ENCODE measurements at regions of chr11 and their contacts with region 1.

Region 1: GRCh38 chr11:66408488-66409214 is 12.2 kb upstream of the NPAS4 start:
- DNase-seq: peak; percentile 84 to 97 (median 93)
- ATAC-seq: peak; percentile 88
- H3K4me3 ChIP-seq: peak overlapping the region; percentile 34
- H3K4me3 Mint-ChIP-seq: peak overlapping the region; percentile 84
- H3K27ac ChIP-seq: no peak overlapping the region
- H3K27ac Mint-ChIP-seq: no peak overlapping the region
- H3K4me1 ChIP-seq: peaks cover 14% of the 10 kb centered on the region
- H3K4me1 Mint-ChIP-seq: peaks cover 5% of the 10 kb centered on the region
- H3K27me3 ChIP-seq: peaks cover 2 to 19% of the 10 kb centered on the region in 2 experiments
- H3K27me3 Mint-ChIP-seq: peaks cover 50% of the 10 kb centered on the region
- CTCF ChIP-seq: peak; percentile 100

Region 2: DNA sequence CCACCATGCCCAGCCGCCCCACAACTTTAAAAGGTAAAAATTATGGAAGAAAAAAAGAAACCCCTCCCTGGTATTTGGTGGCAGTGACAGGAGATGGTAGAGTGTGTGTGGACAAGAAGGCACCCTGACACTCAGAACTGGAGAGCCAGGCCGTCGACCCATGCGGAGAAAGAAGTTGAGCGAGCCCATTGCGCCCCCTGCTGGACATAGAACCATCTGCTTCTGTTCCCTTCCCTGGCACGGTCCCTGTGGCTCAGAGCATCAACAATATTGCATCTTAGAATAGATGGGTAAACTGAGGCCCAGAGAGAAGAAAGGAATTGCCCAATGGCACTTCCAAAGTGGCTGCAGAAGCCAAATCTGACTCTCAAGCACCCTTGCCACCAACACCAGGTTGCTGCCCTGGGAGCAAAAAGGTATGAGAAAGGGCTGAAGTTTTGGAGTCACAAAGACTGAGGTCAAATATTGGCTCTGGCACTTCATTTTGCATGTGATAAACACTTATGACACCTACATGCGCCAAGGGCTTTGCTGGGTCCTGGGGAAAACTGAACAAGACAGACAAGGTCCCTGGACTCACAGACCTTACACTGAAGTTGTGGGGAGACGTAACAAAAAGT is 21.4 kb after region 1 on chr11:
- CTCF ChIA-PET with region 1: interaction called, 4 read pairs
- POLR2A ChIA-PET with region 1: no interaction called
- intact Hi-C with region 1: loop called (anchors 1 kb)
- DNase-seq: peak; percentile 56 to 87 (median 64)
- ATAC-seq: peak; percentile 68
- H3K4me3 ChIP-seq: no peak overlapping the region
- H3K4me3 Mint-ChIP-seq: no peak overlapping the region
- H3K27ac ChIP-seq: no peak overlapping the region
- H3K27ac Mint-ChIP-seq: no peak overlapping the region
- H3K4me1 ChIP-seq: no peaks in the 10 kb centered on the region
- H3K4me1 Mint-ChIP-seq: peaks cover 5% of the 10 kb centered on the region
- H3K27me3 ChIP-seq: no peaks in the 10 kb centered on the region
- H3K27me3 Mint-ChIP-seq: peaks cover 4% of the 10 kb centered on the region
- CTCF ChIP-seq: peak; percentile 81

Region 3: GRCh38 chr11:66480117-66480938 is 71.7 kb after region 1 on chr11 and contains the start of gene DPP3:
- CTCF ChIA-PET with region 1: interaction called, 3 read pairs
- POLR2A ChIA-PET with region 1: interaction called, 5 read pairs
- intact Hi-C with region 1: loop called (anchors 1 kb)
- DNase-seq: peak; percentile 91 to 97 (median 95)
- ATAC-seq: peak; percentile 98
- H3K4me3 ChIP-seq: peak within 1 kb of the TSS; percentile 79
- H3K4me3 Mint-ChIP-seq: peak within 1 kb of the TSS; percentile 91
- H3K27ac ChIP-seq: peak within 1 kb of the TSS; percentile 70 to 79
- H3K27ac Mint-ChIP-seq: peak within 1 kb of the TSS; percentile 83
- H3K4me1 ChIP-seq: peaks cover 29% of the 10 kb centered on the region
- H3K4me1 Mint-ChIP-seq: peaks cover 24% of the 10 kb centered on the region
- H3K27me3 ChIP-seq: no peaks in the 10 kb centered on the region
- H3K27me3 Mint-ChIP-seq: no peaks in the 10 kb centered on the region
- CTCF ChIP-seq: no peak
- total RNA-seq, gene DPP3: 16.9 to 17.7 TPM

Region 4: DNA sequence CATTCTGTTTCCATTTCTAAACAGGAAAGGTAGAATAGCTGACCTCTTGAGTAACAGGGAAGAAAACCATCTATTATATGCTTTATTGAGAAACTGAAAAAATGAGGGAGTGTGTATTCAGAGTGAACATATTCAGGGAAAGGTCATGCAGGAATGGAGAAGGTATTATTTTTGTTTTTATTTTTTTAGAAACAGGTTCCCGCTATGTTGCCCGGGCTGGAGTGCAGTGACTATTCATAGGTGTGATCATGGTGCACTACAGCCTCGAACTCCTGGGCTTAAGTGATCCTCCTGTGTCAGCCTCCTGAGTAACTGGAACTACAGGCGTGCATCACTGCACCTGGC is 425.8 kb after region 1 on chr11:
- CTCF ChIA-PET with region 1: interaction called, 5 read pairs
- POLR2A ChIA-PET with region 1: no interaction called
- intact Hi-C with region 1: loop called in 1 of 2 experiments (anchors 1 kb)
- DNase-seq: peak in 1 of 14 experiments; percentile 9
- ATAC-seq: no peak
- H3K4me3 ChIP-seq: no peak overlapping the region
- H3K4me3 Mint-ChIP-seq: no peak overlapping the region
- H3K27ac ChIP-seq: no peak overlapping the region
- H3K27ac Mint-ChIP-seq: peak overlapping the region; percentile 9
- H3K4me1 ChIP-seq: peaks cover 3% of the 10 kb centered on the region
- H3K4me1 Mint-ChIP-seq: peaks cover 11% of the 10 kb centered on the region
- H3K27me3 ChIP-seq: no peaks in the 10 kb centered on the region
- H3K27me3 Mint-ChIP-seq: no peaks in the 10 kb centered on the region
- CTCF ChIP-seq: peak; percentile 59

Measured in CD4-positive, alpha-beta T cell (primary cell).